GM10248 (cell line): ENCODE measurements at regions of chr1 and their contacts with region 1.

Region 1: DNA sequence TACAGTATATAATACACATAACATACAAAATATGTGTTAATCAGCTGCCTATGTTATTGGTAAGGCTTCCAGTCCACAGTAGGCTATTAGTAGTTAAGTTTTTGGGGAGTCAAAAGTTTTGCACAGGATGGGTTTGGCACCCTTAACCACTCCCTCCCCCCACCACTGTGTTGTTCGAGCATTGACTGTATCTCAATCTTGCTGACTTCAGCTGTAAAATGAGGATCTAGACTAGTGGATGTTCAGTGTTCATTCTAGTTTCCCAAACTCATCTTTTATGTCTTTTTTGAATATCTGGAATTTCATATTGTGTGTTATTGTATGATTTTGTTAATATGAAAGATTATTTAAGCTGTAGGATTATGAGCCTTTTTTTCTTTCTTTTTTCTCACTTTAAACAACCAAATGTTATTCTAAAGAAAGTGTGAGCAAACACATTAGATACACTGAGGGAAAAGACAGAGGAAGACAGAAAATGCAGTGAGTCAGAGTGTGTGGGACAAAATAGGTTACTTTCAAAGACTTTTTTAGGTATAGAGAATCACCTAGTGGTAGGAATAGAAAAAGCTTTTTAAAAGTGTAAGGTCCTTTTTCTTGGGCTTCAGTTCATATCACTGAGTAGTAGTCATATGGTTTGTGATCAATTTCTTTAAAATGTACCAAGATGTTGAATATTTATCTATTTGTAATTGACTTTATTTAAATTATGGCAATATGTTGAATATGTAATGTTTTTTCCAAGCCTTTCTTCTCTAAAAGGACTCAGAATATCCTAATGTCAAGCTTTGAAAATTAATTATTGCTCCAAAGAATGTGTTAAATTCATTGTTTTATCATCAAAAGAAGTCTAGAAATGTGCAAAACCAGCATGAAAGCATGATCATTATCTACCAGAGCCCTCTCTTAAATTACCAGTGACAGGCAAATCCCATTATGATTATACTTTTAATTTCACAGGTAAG is 17.9 kb upstream of the CENPF start:
- DNase-seq: peak; percentile 26
- CTCF ChIP-seq: peak; percentile 57

Region 2: DNA sequence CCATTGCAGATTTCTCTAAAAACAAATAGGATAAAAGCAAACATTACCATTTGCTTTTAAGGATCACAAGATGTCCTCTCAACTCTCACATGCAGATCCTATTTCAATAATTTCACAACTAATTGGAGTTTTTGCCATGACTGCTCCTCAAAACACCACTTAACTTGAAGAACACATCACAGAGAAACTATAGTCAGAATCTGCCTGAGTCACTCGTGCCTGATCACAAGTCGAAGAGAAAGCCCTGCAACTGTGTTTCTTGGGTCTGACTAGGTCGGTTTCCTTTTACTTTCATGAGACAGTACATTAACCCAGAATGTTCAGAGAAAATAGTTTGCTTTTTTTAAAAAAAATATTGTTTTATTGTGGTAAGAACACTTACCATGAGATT is 350.5 kb before region 1 on chr1:
- CTCF ChIA-PET with region 1: no interaction called
- POLR2A ChIA-PET with region 1: no interaction called
- DNase-seq: no peak
- CTCF ChIP-seq: no peak

Region 3: DNA sequence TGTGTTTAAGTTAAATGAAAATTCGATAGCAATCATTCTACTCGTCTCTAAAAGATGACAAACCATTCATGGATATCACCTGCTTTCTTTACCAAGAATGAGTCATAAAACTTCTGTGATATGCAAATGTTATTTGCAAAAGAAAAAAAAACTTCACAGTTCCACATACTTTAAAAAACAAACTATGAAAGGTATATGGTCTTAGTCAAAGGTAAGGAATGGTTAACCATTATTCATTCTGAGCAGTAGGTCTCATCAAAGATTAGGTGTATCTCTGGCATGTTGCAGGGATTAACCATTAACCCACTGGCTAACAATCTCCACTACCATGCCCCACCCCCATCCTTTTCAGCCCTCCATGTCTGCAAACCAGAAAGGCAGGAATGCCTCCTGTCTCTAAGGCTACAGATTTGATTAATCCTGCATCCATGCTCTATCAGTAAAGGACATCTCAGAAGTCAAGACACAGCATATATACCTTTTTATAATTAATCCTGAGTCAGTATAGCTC is 78.1 kb before region 1 on chr1:
- CTCF ChIA-PET with region 1: no interaction called
- POLR2A ChIA-PET with region 1: no interaction called
- DNase-seq: no peak
- CTCF ChIP-seq: no peak

Region 4: GRCh38 chr1:214566158-214567104 is 18.7 kb before region 1 on chr1:
- CTCF ChIA-PET with region 1: interaction called, 83 read pairs
- POLR2A ChIA-PET with region 1: no interaction called
- DNase-seq: no peak
- CTCF ChIP-seq: no peak

Region 5: DNA sequence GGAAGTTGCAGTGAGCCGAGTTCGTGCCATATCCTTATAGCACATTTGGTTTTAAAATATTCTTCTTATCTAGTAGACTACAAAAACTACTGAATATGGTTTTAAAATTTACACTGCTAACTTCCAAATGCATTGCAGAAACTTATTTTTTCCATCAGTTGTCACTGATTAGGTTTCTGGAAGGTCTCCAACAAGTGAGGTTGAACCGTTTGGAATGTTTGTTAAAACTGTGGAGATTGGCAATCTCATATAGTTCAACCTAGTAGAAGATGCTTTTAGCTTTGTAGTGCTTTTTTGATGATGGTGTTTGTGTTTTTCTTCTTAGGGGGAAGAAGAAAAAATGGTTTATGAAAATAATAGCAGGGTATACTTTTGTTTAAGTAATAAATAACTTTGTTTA is 30.8 kb after region 1 on chr1:
- CTCF ChIA-PET with region 1: no interaction called
- POLR2A ChIA-PET with region 1: no interaction called
- DNase-seq: no peak
- CTCF ChIP-seq: no peak